ENCODE measurements at regions of chr7 and their contacts with region 1.

Region 1: DNA sequence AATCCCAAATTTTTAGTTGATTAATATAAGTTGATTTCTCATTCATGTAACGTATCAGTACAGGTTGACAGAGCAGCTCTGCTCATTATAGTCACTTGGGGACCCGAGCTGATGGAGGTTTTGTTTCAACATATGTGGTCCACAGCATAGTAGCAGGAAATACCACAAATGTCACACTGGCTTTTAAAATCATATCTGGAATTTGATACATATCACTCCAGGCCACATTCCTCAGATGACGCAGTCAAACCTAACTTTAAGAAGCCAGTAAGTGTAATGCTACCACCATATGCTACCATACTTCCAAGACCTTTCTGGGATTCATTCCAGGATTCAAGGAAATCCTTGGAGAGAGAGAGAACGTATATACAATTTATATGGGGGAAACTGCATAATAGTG is 156.3 kb downstream of the PHF14 start:
- DNase-seq: no peak
- H3K4me3 Mint-ChIP-seq: no peak overlapping the region
- H3K27ac Mint-ChIP-seq: no peak overlapping the region
- H3K4me1 Mint-ChIP-seq: peaks cover 40% of the 10 kb centered on the region
- H3K27me3 Mint-ChIP-seq: no peaks in the 10 kb centered on the region

Region 2: DNA sequence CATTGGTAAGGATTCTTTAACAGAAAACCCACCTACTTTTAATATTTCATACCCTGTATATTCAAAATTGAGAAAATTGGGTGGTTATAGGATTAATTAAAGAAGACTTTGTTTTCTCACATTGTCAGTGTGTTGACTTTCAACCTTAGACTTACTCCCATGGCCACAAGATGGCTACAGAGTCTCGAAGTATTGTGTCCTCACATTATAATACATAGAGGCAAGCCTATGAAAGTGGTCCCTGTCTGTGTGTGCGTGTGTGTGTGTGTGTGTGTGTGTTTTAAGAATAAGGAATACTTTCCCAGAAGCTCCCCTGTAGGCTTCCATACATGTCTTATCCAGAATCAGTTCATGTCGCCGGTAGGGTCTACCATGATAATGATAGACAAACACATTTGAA is 23.7 kb after region 1 on chr7:
- intact Hi-C with region 1: loop called (anchors 2 kb)
- DNase-seq: no peak
- H3K4me3 Mint-ChIP-seq: no peak overlapping the region
- H3K27ac Mint-ChIP-seq: no peak overlapping the region
- H3K4me1 Mint-ChIP-seq: no peaks in the 10 kb centered on the region
- H3K27me3 Mint-ChIP-seq: no peaks in the 10 kb centered on the region

Region 3: DNA sequence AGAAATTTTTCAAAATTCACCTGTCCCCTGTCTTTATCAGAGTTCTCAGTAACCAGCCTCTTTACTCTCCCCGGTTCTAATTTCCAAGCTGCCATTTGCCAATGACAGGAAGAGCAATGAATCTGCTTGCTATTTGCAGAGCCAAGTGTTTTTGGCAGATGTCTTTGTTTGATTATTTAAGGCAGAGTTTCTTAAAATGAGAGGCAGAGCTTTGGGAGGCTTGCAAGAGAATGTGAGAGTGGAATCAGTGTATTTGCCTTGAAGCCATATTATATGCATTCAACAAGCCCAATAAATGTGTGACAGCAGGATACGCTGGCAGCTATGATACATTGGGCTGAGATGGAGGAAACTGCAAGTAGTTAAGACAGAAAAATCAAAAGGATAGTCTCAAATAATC is 40.2 kb after region 1 on chr7:
- intact Hi-C with region 1: no loop called
- DNase-seq: no peak
- H3K4me3 Mint-ChIP-seq: no peak overlapping the region
- H3K27ac Mint-ChIP-seq: no peak overlapping the region
- H3K4me1 Mint-ChIP-seq: peaks cover 6% of the 10 kb centered on the region
- H3K27me3 Mint-ChIP-seq: no peaks in the 10 kb centered on the region

Measured in activated T-helper 1 cell treated with anti-CD3 and anti-CD28 coated beads, Interleukin-12 subunit alpha, Interleukin-12 subunit beta, Interleukin-2, Interleukin-4 antibody, amounts not matched to agents 30 ng/mL and 10 ng/mL and 1 ng/mL, durations not matched to agents 14 hours and 24 hours and 36 hours (primary cell).